ENCODE measurements at regions of chr3 and their contacts with region 1.

Region 1: DNA sequence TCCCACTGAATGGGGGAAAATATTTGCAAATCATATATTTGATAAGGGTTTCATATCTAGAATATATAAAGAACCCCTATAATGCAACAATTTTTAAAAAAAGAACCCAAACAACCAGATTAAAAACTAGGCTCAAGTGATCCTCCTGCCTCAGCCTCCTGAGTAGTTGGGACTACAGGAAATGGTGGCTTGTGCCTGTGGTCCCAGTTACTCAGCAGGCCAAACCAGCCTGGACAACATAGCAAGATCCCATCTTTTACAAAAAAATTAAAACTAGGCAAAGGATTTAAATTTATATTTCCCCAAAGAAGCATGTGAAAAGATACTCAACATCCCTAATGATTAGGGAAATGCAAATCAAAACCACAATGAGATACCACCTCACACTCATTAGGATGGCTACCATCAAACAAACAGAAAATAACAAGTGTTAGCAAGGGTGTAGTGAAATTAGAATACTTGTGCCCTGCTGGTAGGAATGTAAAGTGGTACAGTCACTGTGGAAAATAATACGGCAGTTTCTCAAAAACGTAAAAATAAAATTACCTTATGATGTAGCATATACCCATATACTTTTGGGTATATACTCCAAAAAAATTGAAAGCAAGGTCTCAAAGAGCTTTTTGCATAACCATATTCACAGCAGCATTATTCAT is 19.7 kb downstream of the TFDP2 start:
- DNase-seq: no peak
- H3K4me3 ChIP-seq: no peak overlapping the region
- H3K27ac ChIP-seq: no peak overlapping the region
- H3K4me1 ChIP-seq: no peaks in the 10 kb centered on the region
- H3K27me3 ChIP-seq: no peaks in the 10 kb centered on the region
- CTCF ChIP-seq: 0 out of 2 replicates have a peak, but pooled peaks have one; percentile 38

Region 2: DNA sequence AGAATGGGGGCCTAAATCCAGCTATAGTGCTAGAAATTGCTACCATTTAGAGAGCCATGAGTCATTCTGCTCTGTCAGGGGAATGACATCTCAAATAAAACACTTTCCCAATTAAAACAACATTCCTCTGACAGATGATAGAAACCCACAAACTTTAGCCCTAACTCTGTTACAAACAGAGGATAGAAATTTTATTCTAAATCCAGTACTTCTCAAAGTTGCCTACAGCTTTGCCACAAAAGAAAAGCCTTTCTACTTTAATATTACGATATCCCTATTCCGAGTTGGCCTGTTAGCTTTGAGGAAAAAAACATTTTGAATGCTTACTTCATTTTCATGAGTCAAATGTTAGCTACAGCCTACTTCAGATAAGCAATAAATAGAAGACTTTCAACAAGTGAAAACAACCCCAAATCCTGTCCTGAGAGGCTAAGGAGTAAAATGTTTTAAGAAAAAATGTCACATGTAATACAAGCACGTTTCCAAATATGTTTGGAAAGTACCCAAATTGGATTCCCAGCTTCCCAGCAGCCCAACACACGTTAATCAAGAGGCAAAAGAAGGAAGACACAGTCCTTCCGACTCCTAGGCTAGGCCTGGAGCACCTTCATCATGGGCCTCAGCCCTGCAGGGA is 169.6 kb before region 1 on chr3:
- CTCF ChIA-PET with region 1: no interaction called
- POLR2A ChIA-PET with region 1: no interaction called
- intact Hi-C with region 1: loop called (anchors 2 kb)
- DNase-seq: peak in 1 of 2 experiments; percentile 78
- H3K4me3 ChIP-seq: no peak overlapping the region
- H3K27ac ChIP-seq: peak overlapping the region; percentile 78
- H3K4me1 ChIP-seq: peaks cover 27% of the 10 kb centered on the region
- H3K27me3 ChIP-seq: no peaks in the 10 kb centered on the region
- CTCF ChIP-seq: no peak

Region 3: GRCh38 chr3:142175478-142175877 is 45.8 kb after region 1 on chr3:
- CTCF ChIA-PET with region 1: no interaction called
- POLR2A ChIA-PET with region 1: interaction called, 10 read pairs
- intact Hi-C with region 1: no loop called
- DNase-seq: no peak
- H3K4me3 ChIP-seq: no peak overlapping the region
- H3K27ac ChIP-seq: no peak overlapping the region
- H3K4me1 ChIP-seq: no peaks in the 10 kb centered on the region
- H3K27me3 ChIP-seq: no peaks in the 10 kb centered on the region
- CTCF ChIP-seq: no peak

Region 4: DNA sequence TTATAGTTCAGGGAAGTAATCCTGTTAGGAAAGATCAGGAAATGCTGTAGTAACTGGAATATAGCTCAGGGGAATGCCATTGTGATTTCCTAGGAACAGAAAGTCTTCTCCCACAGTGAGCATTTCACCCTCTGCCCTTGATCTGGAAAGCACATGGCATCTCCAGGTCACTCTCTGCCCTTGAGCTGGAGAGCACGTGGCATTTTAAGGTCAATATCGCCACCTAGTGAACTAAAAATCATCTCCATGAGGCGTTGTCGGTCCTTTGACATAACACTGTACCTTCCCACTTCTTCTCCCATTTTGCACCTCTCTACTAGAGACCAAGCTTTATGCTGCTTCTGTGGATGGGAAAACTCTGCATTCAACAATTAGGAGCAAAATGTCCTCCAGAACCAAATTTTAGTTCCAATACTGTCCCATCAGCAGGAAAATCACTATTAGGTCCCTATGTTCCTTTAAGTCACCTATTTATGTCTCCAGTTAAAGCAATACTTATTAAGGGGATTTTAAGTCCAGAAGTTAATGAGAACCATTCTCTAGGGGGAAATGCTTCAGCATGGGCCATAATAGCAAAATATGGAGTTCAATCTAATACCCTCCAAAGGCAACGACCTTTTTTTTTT is 150.4 kb after region 1 on chr3:
- CTCF ChIA-PET with region 1: interaction called, 8 read pairs
- POLR2A ChIA-PET with region 1: no interaction called
- intact Hi-C with region 1: loop called (anchors 1 kb)
- DNase-seq: peak; percentile 40 to 64
- H3K4me3 ChIP-seq: no peak overlapping the region
- H3K27ac ChIP-seq: no peak overlapping the region
- H3K4me1 ChIP-seq: peaks cover 20% of the 10 kb centered on the region
- H3K27me3 ChIP-seq: no peaks in the 10 kb centered on the region
- CTCF ChIP-seq: peak; percentile 83

Region 5: GRCh38 chr3:142296507-142296906 is 166.9 kb after region 1 on chr3:
- CTCF ChIA-PET with region 1: no interaction called
- POLR2A ChIA-PET with region 1: interaction called, 13 read pairs
- intact Hi-C with region 1: no loop called
- DNase-seq: no peak
- H3K4me3 ChIP-seq: no peak overlapping the region
- H3K27ac ChIP-seq: no peak overlapping the region
- H3K4me1 ChIP-seq: no peaks in the 10 kb centered on the region
- H3K27me3 ChIP-seq: no peaks in the 10 kb centered on the region
- CTCF ChIP-seq: no peak

Region 6: DNA sequence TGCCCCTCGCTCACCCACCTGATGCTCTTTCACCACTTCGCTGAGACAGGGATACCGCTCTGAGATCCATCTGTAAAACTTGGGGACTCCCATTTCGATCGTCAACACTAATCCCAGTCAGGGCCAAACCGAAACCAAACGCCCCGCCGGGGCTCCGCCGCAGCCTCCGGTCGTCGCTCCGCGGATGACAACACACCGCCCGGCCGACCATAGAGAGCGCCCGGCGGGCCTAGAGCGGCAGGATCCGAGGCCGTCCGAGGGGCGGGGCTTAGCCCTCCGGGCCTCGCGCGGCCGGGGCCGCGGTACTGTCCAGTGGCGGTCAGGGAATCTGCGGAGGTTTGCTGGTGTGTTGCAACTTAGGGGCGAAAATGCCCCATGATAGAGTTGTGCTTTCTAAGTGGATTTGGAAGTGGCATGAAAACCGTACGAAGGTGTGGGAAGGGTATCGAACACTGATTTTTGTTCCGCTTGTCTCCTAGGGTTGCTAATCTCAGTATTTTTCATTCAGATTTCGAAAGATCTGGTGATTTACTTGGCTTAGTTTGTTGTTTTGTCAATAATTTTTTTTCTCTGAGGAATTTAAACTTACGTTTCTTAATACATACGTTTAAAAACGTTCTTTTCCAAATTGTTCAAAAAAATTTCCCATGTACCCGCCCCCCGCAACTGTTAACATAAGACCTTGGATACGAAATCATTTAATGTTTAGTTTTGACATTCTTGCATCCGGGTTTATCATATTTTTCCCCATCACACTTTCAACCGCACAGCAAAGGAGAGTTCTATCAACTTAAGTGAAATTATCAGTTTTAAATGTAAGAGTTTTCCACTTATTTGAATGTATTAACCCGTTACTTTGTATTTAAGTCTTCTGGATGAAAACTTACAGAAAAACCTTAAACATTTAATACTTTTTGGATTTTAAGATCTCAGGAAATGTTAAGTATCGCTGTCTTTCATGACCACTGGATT is 318.5 kb after region 1 on chr3 and contains the start of gene XRN1:
- CTCF ChIA-PET with region 1: interaction called, 6 read pairs
- POLR2A ChIA-PET with region 1: no interaction called
- intact Hi-C with region 1: loop called (anchors 10 kb)
- DNase-seq: peak; percentile 81 to 98
- H3K4me3 ChIP-seq: peak within 1 kb of the TSS; percentile 80
- H3K27ac ChIP-seq: peak within 1 kb of the TSS; percentile 69
- H3K4me1 ChIP-seq: peaks cover 20% of the 10 kb centered on the region
- H3K27me3 ChIP-seq: no peaks in the 10 kb centered on the region
- CTCF ChIP-seq: no peak
- total RNA-seq, gene XRN1: 45.3 and 47.0 TPM in 2 replicates

Region 7: DNA sequence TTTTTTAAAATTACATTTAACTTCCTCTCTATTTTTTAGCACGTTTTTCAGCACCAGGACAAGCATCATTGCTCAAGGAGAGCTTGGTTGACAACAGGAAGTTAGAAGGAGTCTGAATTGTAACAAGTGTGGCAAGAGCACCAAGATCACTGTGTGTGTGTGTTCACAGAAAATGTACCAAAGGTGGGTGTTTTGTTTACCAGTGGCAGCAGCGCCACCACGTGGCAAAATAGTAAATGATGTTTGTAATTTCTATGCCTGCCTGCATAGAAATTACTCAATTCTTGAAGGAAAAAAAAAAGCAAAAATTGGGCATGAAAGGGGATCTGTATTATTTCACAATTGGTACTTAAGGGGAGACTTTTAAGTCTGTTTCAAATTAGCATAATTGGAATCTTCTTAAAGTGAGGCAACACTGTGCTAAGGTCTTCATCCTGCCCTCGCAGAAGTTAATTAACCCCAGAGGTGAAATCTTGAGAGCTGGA is 864.4 kb after region 1 on chr3:
- CTCF ChIA-PET with region 1: no interaction called
- POLR2A ChIA-PET with region 1: no interaction called
- intact Hi-C with region 1: loop called (anchors 2 kb)
- DNase-seq: peak; percentile 67 to 70
- H3K4me3 ChIP-seq: no peak overlapping the region
- H3K27ac ChIP-seq: no peak overlapping the region
- H3K4me1 ChIP-seq: peaks cover 21% of the 10 kb centered on the region
- H3K27me3 ChIP-seq: no peaks in the 10 kb centered on the region
- CTCF ChIP-seq: peak; percentile 85

Measured in PC-9 (cell line).